Psoas muscle (tissue), 8 donors: ENCODE measurements at regions of chr15 and their contacts with region 1.

Region 1: GRCh38 chr15:52568601-52569256 is at the start of gene ARPP19:
- DNase-seq: peak; percentile 90 to 95
- ATAC-seq: peak; percentile 88 to 95 (median 90)
- H3K4me3 ChIP-seq: peak within 1 kb of the TSS; percentile 88
- H3K27ac ChIP-seq: peak within 1 kb of the TSS; percentile 91
- H3K4me1 ChIP-seq: peaks cover 21% of the 10 kb centered on the region
- H3K27me3 ChIP-seq: no peaks in the 10 kb centered on the region
- CTCF ChIP-seq: no peak
- total RNA-seq, gene ARPP19: 161 to 372 (median 274) TPM

Region 2: GRCh38 chr15:52018693-52019387 is 549.9 kb before region 1 on chr15 and contains the start of gene MAPK6:
- intact Hi-C with region 1: loop called in 1 of 2 experiments (anchors 5 kb)
- DNase-seq: peak; percentile 96 to 97
- ATAC-seq: peak; percentile 89 to 95 (median 92)
- H3K4me3 ChIP-seq: peak within 1 kb of the TSS; percentile 65
- H3K27ac ChIP-seq: peak within 1 kb of the TSS; percentile 83
- H3K4me1 ChIP-seq: peaks cover 32% of the 10 kb centered on the region
- H3K27me3 ChIP-seq: no peaks in the 10 kb centered on the region
- CTCF ChIP-seq: no peak
- total RNA-seq, gene MAPK6: 29.4 to 58.5 (median 47.7) TPM

Region 3: DNA sequence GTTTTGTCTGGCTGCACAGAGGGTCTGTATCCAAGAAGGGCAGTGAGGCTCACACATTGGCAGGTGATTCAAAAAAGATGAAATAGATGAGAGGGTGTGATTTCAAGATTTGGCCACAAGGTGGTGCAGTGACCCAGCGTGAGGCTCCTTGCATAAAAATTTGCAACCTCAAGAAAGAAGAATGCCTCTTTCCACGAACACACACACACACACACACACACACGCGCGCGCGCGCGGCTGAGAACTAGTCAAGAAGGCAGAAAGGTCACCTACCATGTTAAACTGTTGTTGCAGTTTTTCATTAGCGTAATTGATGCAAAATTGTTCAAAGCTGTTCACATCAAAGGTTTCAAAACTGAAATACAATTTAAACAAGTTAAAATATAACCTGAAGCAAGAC is 312.4 kb before region 1 on chr15:
- intact Hi-C with region 1: loop called in 1 of 2 experiments (anchors 10 kb)
- DNase-seq: peak; percentile 55 to 75
- ATAC-seq: peak; percentile 52 to 66 (median 58)
- H3K4me3 ChIP-seq: peak overlapping the region; percentile 20
- H3K27ac ChIP-seq: no peak overlapping the region
- H3K4me1 ChIP-seq: peaks cover 16% of the 10 kb centered on the region
- H3K27me3 ChIP-seq: no peaks in the 10 kb centered on the region
- CTCF ChIP-seq: peak; percentile 70

Region 4: DNA sequence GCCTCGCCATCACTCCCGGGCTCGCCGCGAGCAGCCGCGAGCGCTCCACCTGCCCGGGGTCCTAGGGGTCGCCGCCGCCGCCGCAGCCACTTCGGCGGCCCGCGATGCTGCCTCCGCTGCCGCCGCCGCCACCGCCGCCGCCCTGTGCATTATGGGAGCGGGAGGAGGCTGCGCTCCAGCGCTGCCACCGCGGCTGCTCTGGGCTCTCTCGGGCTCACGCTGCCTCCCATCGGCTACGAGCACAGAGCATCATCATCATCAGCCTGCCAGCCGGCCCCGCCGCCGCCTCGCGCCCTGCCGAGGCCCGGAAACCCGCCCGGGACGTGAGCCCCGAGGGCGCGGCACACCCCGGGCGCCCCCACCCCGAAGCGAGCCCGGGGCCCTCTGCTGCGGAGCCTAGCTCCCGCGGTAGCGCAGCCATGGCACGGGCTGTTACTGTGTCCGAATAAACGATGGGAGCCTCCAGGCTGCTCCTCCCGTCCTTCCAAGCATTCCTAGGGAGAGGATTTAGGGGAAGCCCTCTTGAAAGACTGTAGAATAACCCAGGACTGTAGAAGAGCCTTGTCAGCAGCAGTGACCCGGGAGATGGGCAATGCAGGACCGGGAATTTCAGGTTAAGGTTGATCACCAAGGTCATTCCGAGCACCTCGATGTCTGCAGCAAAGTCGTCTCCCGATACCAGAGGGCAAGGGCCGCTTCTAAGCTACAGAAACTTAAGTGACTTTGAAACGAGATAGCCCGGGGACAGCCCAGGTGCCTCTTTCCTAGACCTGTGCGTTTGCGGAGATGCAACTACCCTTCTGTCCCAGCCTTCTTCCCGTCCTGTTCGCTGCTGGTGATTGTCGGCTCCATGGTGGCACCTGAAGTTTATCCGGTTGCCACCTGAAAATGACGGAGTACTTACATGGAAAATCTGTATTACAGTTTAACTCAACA is 39.5 kb before region 1 on chr15:
- intact Hi-C with region 1: loop called in 1 of 2 experiments (anchors 5 kb)
- DNase-seq: peak; percentile 80 to 89
- ATAC-seq: peak; percentile 77 to 87 (median 85)
- H3K4me3 ChIP-seq: peak overlapping the region; percentile 94
- H3K27ac ChIP-seq: peak overlapping the region; percentile 91
- H3K4me1 ChIP-seq: peaks cover 19% of the 10 kb centered on the region
- H3K27me3 ChIP-seq: no peaks in the 10 kb centered on the region
- CTCF ChIP-seq: no peak